ENCODE measurements at regions of chr5 and their contacts with region 1.

Region 1: GRCh38 chr5:74394916-74395781 is 245.4 kb downstream of the ENC1 start:
- DNase-seq: peak; percentile 17
- ATAC-seq: no peak
- H3K4me3 ChIP-seq: no peak overlapping the region
- H3K27ac ChIP-seq: no peak overlapping the region
- H3K4me1 ChIP-seq: peaks cover 12% of the 10 kb centered on the region
- H3K27me3 ChIP-seq: no peaks in the 10 kb centered on the region
- CTCF ChIP-seq: no peak

Region 2: DNA sequence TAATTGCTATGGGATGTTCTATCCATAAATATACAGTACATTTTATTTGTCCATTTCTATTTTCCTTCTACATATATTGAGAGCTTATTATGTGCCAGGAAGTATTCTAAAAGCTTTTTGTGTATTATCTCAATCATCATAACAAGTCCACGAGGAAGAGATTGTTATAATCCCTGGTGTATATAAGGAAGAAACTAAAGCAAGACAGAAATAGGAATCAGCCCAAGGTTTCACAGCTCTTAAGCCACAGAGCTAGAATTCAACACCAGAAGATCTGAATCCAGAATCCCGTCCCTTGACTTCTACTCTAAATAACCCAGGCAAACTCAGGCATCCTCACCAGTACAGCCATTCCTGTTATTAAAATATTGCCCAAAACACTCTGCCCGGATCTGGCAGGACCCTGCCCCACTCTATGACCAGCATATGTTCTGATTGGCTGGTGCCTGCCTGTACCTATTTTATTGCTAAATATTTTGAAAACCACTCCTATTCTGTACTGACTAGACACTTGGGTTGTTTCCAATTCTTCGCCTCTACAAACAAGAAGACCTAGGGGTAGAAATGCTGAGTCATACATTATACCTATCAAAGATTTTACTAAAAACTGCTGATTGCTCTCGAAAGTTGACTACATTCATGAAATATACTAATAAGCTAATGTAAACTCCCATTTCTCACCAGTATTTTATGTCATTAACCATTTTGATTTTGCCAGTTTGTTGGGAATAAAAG is 52.0 kb before region 1 on chr5:
- CTCF ChIA-PET with region 1: no interaction called
- POLR2A ChIA-PET with region 1: no interaction called
- intact Hi-C with region 1: loop called (anchors 5 kb)
- DNase-seq: peak; percentile 86
- ATAC-seq: peak; percentile 76
- H3K4me3 ChIP-seq: no peak overlapping the region
- H3K27ac ChIP-seq: peak overlapping the region; percentile 3; the same call in 1 of the 2 replicates
- H3K4me1 ChIP-seq: peaks cover 24% of the 10 kb centered on the region
- H3K27me3 ChIP-seq: no peaks in the 10 kb centered on the region
- CTCF ChIP-seq: no peak

Measured in PC-3 (cell line).